ENCODE measurements at regions of chr1 and their contacts with region 1.

Region 1: DNA sequence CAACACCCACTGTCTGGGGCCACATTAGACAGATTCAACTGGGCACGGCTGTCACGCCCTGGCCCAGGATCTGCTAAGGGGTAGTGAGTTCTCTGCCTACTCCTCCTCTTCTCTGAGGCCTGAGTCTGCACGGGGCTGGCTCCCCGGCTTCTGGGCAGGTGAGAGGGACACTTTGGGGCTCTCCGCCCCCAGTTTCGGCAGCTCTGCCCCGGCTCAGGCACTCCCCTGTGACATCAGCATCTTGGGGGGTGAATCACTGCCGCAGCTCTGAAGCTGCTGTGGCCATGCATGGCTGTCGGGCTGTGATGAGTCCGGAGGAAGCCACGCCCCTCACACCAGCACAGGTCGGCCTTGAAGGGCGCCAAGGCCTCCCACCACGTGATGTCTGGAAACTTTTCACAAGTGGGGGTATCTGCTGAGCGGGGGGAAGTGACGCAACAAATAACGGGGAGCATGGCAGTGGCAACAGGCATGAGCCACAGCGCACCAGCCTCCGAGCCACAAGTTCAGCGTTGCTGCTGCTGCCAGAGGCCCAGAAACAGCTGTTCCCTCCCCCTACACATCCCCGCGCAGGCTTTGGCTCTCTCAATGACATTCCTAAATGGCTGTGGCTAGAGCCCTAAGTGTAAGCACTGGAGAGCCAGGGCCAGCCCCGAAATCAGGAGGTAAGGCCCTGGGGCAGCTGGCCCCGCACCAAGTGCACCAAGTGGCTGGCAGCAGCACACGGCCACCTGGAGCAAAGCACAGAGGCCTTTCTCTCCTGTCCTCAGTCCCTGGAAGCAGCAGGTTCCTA is 26.3 kb downstream of the ZBTB17 start:
- DNase-seq: peak; percentile 53
- H3K4me3 Mint-ChIP-seq: peak overlapping the region; percentile 73
- H3K27ac Mint-ChIP-seq: peak overlapping the region; percentile 98
- H3K4me1 Mint-ChIP-seq: peaks cover 77% of the 10 kb centered on the region
- H3K27me3 Mint-ChIP-seq: no peaks in the 10 kb centered on the region

Region 2: GRCh38 chr1:15650433-15650832 is 299.2 kb before region 1 on chr1:
- intact Hi-C with region 1: no loop called
- DNase-seq: no peak
- H3K4me3 Mint-ChIP-seq: no peak overlapping the region
- H3K27ac Mint-ChIP-seq: no peak overlapping the region
- H3K4me1 Mint-ChIP-seq: no peaks in the 10 kb centered on the region
- H3K27me3 Mint-ChIP-seq: no peaks in the 10 kb centered on the region

Region 3: DNA sequence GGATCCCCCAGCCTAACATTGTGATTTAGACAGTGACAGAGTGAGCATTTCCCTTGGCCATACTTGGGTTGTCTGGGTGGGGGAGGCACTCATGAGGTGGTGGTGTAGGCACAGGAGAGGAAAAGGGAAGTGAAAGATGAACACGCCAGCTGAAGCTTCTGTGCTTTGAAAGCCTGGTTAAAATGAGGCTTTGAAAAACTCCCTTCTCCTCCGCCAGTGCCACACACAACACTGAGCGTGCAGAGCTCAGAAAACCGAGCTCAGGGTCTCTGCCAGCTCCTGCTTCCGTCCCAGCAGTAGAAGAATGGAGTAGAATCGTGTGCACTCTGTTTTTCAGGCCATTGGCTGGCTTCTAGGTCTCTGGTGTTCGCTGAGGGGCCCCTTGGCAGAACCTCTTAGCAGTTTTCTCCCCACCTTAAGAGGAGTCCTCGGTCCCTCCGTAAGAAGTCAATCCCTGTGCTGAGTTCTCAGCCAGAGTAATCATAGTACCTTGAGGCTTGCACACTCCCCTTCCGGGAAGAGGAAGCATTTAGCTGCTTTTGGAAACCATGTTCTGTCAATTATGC is 252.6 kb before region 1 on chr1:
- intact Hi-C with region 1: no loop called
- DNase-seq: peak; percentile 47
- H3K4me3 Mint-ChIP-seq: peak overlapping the region; percentile 86
- H3K27ac Mint-ChIP-seq: peak overlapping the region; percentile 95
- H3K4me1 Mint-ChIP-seq: peaks cover 32% of the 10 kb centered on the region
- H3K27me3 Mint-ChIP-seq: no peaks in the 10 kb centered on the region

Region 4: DNA sequence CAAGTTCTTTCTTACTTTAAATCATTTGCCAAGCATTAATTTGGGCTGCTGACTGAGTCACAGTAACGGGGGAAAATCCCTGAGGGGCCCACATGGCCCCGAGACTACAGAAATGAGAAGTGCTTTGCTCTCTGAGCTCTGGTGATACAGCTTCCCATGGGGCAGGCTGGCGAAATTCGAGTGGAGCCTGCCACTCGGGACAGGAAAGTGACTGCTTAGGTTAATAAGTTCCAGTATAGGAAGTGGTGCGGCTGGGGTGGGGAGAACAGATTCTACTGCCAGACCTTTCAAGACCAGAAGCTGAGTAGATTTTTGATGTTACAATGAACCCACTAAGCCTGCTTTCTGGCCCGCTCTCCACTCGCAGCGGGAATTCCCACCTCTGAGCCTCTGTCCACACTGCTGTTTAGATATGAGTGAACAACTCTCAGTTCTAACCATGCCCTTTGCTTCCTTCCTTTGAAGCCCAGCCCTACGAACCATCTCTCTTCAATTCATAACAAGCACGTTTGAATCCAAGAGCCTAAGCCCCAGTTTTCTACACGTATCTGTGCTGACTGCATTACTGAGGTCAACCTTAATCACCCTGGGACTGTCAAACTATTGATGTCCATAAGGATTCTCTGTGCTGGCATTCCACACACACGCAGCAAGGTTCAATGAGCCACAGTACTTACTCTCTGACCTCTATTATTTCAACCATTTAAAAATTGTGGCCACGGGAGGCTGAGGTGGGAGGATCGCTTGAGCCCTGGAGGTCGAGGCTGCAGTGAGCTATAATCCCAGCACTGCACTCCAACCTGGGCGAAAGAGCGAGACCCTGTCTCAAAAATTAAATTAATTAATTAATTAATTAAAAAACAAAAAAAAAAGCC is 16.7 kb after region 1 on chr1:
- intact Hi-C with region 1: loop called (anchors 1 kb)
- DNase-seq: peak; percentile 72
- H3K4me3 Mint-ChIP-seq: peak overlapping the region; percentile 79
- H3K27ac Mint-ChIP-seq: peak overlapping the region; percentile 95
- H3K4me1 Mint-ChIP-seq: peaks cover 77% of the 10 kb centered on the region
- H3K27me3 Mint-ChIP-seq: no peaks in the 10 kb centered on the region

Region 5: DNA sequence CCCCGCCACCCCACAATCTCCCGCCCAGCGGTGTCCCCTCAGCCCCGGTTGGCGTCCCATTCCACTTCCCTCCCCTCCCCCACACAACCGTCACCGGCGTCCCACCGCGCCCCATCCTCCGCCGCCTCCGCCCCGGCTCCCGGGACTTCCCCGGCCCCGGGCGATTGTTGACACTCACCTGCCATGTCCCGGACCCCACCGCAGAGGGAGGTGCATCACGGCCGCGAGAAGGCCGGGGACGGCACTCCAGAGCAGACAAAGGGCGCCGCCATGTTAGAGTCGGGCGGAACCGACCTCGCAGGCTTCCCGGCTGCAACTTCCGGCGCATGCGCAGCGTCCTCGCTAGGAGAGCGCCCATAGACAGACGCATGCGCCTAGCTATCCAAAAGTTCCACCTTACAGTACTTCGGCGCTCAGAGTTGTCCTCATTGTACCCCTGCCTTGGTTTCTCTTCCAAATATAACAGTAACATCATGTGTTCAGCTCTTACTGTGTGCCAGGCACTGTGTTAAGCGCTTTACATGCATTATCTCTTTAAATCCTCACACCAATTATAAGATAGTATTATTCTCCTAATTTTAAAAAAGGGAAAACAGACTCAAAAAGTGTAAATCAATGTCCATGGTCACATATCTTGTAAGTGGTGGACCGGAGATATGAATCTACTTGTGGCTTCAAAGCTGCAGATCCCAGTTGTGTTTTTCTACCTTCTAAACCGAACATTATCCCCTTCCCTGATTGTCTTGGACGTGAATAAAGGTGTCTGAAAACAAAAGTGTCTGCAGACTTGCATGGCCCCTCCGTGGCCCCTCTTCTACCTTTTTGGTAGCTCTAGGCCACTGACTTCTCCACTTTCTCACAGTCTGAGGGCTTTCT is 26.4 kb after region 1 on chr1 and contains the start of gene ZBTB17:
- intact Hi-C with region 1: loop called (anchors 1 kb)
- DNase-seq: peak; percentile 94
- H3K4me3 Mint-ChIP-seq: peak within 1 kb of the TSS; percentile 89
- H3K27ac Mint-ChIP-seq: peak within 1 kb of the TSS; percentile 93
- H3K4me1 Mint-ChIP-seq: peaks cover 51% of the 10 kb centered on the region
- H3K27me3 Mint-ChIP-seq: peaks cover 2% of the 10 kb centered on the region
- total RNA-seq, gene ZBTB17: 62.6 and 68.8 TPM in 2 replicates

Region 6: GRCh38 chr1:17393230-17393629 is 1443.6 kb after region 1 on chr1:
- intact Hi-C with region 1: no loop called
- DNase-seq: no peak
- H3K4me3 Mint-ChIP-seq: no peak overlapping the region
- H3K27ac Mint-ChIP-seq: no peak overlapping the region
- H3K4me1 Mint-ChIP-seq: peaks cover 8% of the 10 kb centered on the region
- H3K27me3 Mint-ChIP-seq: no peaks in the 10 kb centered on the region

Measured in activated T-helper 1 cell treated with anti-CD3 and anti-CD28 coated beads, Interleukin-12 subunit alpha, Interleukin-12 subunit beta, Interleukin-2, Interleukin-4 antibody, amounts not matched to agents 30 ng/mL and 10 ng/mL and 1 ng/mL, durations not matched to agents 14 hours and 24 hours and 36 hours (primary cell).